ENCODE measurements at regions of chr14 and their contacts with region 1.

Region 1: GRCh38 chr14:102917469-102918211 is 4.8 kb upstream of the AMN start:
- DNase-seq: no peak
- H3K4me3 ChIP-seq: no peak overlapping the region
- H3K27ac ChIP-seq: no peak overlapping the region
- H3K4me1 ChIP-seq: peaks cover 2% of the 10 kb centered on the region
- H3K27me3 ChIP-seq: peaks cover 2% of the 10 kb centered on the region
- CTCF ChIP-seq: peak; percentile 54 to 62

Region 2: GRCh38 chr14:102694530-102695166 is 223.0 kb before region 1 on chr14:
- CTCF ChIA-PET with region 1: no interaction called
- dilution Hi-C with region 1: no loop called
- in situ Hi-C with region 1: no loop called
- intact Hi-C with region 1: loop called (anchors 1 kb)
- DNase-seq: peak; percentile 54
- H3K4me3 ChIP-seq: no peak overlapping the region
- H3K27ac ChIP-seq: no peak overlapping the region
- H3K4me1 ChIP-seq: peaks cover 7% of the 10 kb centered on the region
- H3K27me3 ChIP-seq: no peaks in the 10 kb centered on the region
- CTCF ChIP-seq: peak; percentile 52 to 55

Region 3: GRCh38 chr14:102774391-102775153 is 143.1 kb before region 1 on chr14:
- CTCF ChIA-PET with region 1: interaction called, 3 read pairs
- dilution Hi-C with region 1: no loop called
- in situ Hi-C with region 1: no loop called
- intact Hi-C with region 1: loop called (anchors 1 kb)
- DNase-seq: peak; percentile 63
- H3K4me3 ChIP-seq: no peak overlapping the region
- H3K27ac ChIP-seq: no peak overlapping the region
- H3K4me1 ChIP-seq: peaks cover 24% of the 10 kb centered on the region
- H3K27me3 ChIP-seq: no peaks in the 10 kb centered on the region
- CTCF ChIP-seq: peak; percentile 74 to 83

Region 4: DNA sequence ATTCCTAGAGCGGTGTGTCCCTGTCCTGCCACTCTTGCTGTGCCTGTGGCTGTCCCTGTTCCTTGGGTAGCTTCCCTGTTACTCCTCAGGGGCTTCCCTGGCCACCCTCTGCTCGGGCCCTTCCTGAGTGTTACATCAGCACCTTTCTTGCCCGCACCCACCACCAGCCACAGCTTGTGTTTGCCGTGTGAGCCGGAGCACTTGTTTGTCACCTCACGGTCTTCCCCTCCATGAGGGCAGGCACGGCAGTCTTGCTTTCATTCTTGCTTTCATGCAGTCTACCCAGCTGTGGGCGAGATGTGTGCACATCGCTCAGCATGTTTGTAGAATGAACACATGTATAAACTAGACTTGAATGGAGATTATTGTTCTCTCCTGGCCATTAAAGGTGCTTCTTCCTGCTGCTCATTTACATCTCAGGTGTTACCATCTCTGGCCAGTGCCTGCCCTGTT is 98.4 kb before region 1 on chr14:
- CTCF ChIA-PET with region 1: no interaction called
- dilution Hi-C with region 1: no loop called
- in situ Hi-C with region 1: no loop called
- intact Hi-C with region 1: no loop called
- DNase-seq: peak; percentile 81
- H3K4me3 ChIP-seq: peak overlapping the region; percentile 8 to 48 (median 34)
- H3K27ac ChIP-seq: peak overlapping the region; percentile 66
- H3K4me1 ChIP-seq: peaks cover 20% of the 10 kb centered on the region
- H3K27me3 ChIP-seq: no peaks in the 10 kb centered on the region
- CTCF ChIP-seq: no peak